IMR-90 (cell line): ENCODE measurements at regions of chr17 and their contacts with region 1.

Region 1: GRCh38 chr17:14048169-14048568 is 21.1 kb upstream of the COX10 start:
- DNase-seq: no peak
- ATAC-seq: peak; percentile 14; the same call in 1 of the 2 replicates
- H3K4me3 ChIP-seq: no peak overlapping the region
- H3K27ac ChIP-seq: peak overlapping the region; percentile 41; the same call in 1 of the 2 replicates
- H3K4me1 ChIP-seq: 0 out of 2 replicates have a peak, but pooled peaks cover 3% of the 10 kb centered on the region
- H3K27me3 ChIP-seq: no peaks in the 10 kb centered on the region
- CTCF ChIP-seq: peak; percentile 27; the same call in 1 of the 2 replicates
- POLR2A ChIP-seq: no peak
- RAD21 ChIP-seq: peak; percentile 29

Region 2: DNA sequence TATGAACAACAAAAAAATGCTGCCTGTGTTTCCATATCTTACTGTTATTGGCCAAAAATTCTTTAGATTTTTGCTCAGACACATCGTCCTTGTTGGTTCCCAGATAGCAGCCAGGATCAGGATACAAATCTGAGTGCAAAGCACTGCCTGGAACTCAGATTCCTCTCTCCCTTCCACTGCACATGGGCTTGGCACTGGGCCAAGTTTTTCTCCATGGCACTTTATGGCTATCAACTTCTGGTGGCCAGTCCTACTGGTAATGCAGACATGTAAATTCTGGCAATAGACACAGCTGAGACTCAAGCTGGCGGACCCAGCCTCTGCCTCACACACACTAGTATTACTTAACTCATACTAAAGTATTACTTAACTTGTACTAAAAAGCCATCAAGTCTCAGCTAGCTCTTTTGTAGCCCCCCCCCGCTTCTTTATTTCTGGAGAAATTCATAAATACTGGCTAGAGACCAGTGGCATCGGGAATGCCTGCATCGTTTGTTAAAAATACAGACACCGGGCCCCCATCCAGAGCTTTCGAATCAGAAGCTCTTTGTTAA is 160.0 kb before region 1 on chr17:
- CTCF ChIA-PET with region 1: no interaction called
- POLR2A ChIA-PET with region 1: no interaction called
- dilution Hi-C with region 1: no loop called
- in situ Hi-C with region 1: no loop called
- intact Hi-C with region 1: loop called (anchors 10 kb)
- DNase-seq: peak; percentile 35
- ATAC-seq: peak; percentile 30
- H3K4me3 ChIP-seq: no peak overlapping the region
- H3K27ac ChIP-seq: no peak overlapping the region
- H3K4me1 ChIP-seq: peaks cover 10% of the 10 kb centered on the region
- H3K27me3 ChIP-seq: no peaks in the 10 kb centered on the region
- CTCF ChIP-seq: no peak
- POLR2A ChIP-seq: no peak
- RAD21 ChIP-seq: no peak

Region 3: DNA sequence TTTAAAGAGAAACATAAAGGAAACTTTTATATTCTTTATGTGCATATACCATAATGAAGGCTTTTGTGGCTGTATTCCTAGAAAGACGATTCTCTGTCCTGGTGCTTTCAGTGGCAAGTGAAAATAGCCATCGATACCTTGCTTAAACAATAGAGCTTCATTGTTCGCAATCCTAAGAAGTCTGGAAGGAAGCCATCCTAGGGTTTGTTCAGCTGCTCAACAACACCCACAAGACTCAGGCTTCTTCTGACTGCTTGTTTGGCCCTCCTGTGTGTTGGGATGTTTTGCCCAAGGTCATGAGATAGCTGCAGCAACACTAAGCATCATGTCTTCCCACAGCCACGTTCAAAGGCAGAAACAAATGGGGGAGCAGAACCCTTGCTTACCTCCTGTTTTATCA is 15.0 kb before region 1 on chr17:
- CTCF ChIA-PET with region 1: no interaction called
- POLR2A ChIA-PET with region 1: no interaction called
- dilution Hi-C with region 1: no loop called
- in situ Hi-C with region 1: no loop called
- intact Hi-C with region 1: no loop called
- DNase-seq: no peak
- ATAC-seq: no peak
- H3K4me3 ChIP-seq: no peak overlapping the region
- H3K27ac ChIP-seq: no peak overlapping the region
- H3K4me1 ChIP-seq: no peaks in the 10 kb centered on the region
- H3K27me3 ChIP-seq: no peaks in the 10 kb centered on the region
- CTCF ChIP-seq: no peak
- POLR2A ChIP-seq: no peak
- RAD21 ChIP-seq: no peak

Region 4: GRCh38 chr17:14123619-14124278 is 75.6 kb after region 1 on chr17:
- CTCF ChIA-PET with region 1: no interaction called
- POLR2A ChIA-PET with region 1: no interaction called
- dilution Hi-C with region 1: no loop called
- in situ Hi-C with region 1: no loop called
- intact Hi-C with region 1: no loop called
- DNase-seq: no peak
- ATAC-seq: no peak
- H3K4me3 ChIP-seq: no peak overlapping the region
- H3K27ac ChIP-seq: no peak overlapping the region
- H3K4me1 ChIP-seq: no peaks in the 10 kb centered on the region; the same call in 1 of the 2 replicates
- H3K27me3 ChIP-seq: no peaks in the 10 kb centered on the region
- CTCF ChIP-seq: no peak
- POLR2A ChIP-seq: no peak
- RAD21 ChIP-seq: no peak